Left cardiac atrium (tissue), 4 donors: ENCODE measurements at regions of chr6 and their contacts with region 1.

Region 1: GRCh38 chr6:51531623-51532022 is 555.8 kb downstream of the PKHD1 start:
- DNase-seq: no peak
- ATAC-seq: no peak

Region 2: DNA sequence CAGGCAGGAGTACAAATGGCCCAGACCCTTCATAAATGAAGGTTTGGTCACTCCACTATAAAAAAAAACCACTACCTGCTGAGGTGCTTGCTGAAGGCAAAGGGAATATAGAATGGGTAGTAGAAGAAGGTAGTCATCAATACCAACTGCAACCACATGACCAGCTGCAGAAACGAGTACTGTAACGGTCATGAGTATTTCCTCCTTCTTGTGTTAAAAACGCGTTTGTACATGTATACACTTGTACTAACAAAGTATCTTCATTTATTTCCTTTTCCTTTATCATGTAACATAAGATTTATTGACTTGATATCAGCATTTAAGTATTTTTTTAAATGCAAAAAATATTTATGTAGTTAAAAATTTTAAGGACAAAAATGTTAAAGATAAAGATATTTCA is 474.3 kb before region 1 on chr6:
- intact Hi-C with region 1: no loop called
- DNase-seq: no peak
- ATAC-seq: no peak

Region 3: DNA sequence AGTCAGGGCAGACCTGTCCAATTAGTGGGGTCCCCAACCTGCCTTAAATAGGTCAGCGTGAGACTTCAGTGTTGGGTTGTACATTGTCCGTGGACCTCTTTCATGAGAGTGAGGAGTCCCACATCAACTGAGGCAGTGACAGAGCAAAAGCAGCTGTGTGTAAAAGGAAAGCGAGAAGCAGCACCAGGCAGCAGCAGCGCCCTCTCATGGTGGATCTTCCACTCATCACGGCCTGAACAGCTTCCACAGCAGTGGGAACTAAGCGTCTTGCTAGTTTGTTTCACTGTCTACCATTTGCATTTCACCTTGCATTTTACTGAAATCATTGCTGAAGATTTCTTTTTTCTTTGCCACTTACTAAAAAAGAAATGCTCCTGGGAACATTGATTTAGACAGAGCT is 222.0 kb after region 1 on chr6:
- intact Hi-C with region 1: loop called in 1 of 2 experiments (anchors 10 kb)
- DNase-seq: peak; percentile 20
- ATAC-seq: no peak

Region 4: GRCh38 chr6:51959744-51960383 is 428.2 kb after region 1 on chr6:
- intact Hi-C with region 1: loop called in 1 of 2 experiments (anchors 10 kb)
- DNase-seq: peak; percentile 61
- ATAC-seq: no peak

Region 5: DNA sequence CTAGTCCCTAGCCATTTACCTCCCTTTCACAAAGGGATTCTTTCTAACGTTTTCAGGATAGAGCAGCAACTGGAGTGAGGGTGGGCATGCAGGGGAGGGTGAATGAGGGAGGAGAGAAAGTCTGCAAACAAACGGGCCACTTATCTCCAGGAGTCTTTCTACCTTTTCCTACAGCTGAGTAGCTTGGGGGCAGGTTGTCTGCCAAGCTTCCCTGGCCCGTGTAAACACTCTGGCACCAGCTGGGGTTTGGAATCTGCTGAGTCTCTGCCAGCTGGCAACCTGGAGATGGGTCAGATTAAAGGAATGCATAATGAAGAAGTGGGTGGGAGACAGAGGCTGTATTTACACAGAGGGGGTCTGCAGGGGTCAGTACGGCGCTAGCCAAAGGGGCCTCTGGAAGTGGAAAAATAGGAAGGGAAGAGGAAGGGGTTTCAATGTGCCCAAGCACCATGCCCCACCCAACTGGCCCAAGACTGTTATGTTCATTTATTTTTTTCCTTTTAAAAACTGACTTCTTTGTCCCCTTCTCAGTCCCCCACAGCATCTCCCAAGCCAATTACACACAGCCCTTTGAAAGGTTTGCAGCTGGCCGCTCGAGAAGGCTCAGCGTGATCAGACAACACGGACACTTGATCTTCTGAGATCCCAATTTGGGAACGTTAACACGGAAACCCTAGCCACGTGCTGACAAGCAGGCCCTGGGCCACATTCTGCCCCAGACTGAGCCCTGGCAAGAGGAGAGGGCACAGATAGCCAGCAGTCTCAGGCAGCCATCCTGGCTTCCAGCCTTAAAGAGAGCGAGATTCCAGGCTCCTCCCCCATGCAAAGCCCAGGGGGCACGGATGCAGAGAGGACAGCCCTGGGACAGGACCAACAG is 1020.0 kb after region 1 on chr6:
- intact Hi-C with region 1: no loop called
- DNase-seq: peak; percentile 66
- ATAC-seq: peak; percentile 87 to 89